GM10248 (cell line): ENCODE measurements at regions of chr17 and their contacts with region 1.

Region 1: GRCh38 chr17:15029469-15029868 is 235.7 kb downstream of the PMP22 start:
- DNase-seq: no peak
- CTCF ChIP-seq: no peak

Region 2: DNA sequence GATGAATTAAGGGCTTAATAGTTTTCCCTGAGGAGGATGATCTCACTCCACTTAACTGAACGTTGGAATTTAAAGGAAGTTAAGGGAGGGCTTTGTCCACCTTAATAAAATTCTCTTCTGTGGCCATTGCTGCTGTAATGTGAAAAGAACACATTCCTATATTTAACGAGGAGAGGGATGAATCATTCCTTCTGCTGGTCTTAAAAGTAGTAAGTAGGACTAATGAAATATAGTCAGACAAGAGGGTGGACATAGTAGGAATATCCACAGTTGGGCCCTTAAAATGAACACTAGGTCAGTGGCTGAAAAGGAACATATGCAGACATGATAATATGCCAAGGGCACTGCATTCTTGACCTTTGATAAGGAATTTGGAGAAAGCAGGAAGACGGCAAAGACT is 169.9 kb before region 1 on chr17:
- CTCF ChIA-PET with region 1: no interaction called
- POLR2A ChIA-PET with region 1: no interaction called
- DNase-seq: no peak
- CTCF ChIP-seq: no peak

Region 3: DNA sequence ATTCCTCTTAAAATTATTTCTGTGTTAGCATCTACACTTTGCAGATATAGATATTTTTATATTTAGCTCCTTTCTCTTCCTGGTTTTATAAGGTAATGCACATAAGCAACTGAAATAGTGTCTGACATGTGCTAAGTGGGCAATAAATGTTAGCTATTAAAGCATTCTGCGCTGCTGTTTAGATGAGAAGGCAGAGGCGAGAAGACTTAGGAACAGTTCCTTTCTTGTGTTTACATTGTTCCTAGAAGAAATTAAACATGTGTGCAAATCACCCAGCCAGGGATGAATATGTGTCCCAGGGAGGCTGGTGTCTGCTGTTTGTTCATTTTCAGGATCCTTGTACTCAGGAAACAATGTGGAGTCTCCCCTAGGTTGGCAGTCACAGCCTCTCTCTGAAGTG is 56.6 kb before region 1 on chr17:
- CTCF ChIA-PET with region 1: no interaction called
- POLR2A ChIA-PET with region 1: interaction called, 10 read pairs
- DNase-seq: no peak
- CTCF ChIP-seq: no peak